Aorta (tissue), 5 donors: ENCODE measurements at regions of chr20 and their contacts with region 1.

Region 1: DNA sequence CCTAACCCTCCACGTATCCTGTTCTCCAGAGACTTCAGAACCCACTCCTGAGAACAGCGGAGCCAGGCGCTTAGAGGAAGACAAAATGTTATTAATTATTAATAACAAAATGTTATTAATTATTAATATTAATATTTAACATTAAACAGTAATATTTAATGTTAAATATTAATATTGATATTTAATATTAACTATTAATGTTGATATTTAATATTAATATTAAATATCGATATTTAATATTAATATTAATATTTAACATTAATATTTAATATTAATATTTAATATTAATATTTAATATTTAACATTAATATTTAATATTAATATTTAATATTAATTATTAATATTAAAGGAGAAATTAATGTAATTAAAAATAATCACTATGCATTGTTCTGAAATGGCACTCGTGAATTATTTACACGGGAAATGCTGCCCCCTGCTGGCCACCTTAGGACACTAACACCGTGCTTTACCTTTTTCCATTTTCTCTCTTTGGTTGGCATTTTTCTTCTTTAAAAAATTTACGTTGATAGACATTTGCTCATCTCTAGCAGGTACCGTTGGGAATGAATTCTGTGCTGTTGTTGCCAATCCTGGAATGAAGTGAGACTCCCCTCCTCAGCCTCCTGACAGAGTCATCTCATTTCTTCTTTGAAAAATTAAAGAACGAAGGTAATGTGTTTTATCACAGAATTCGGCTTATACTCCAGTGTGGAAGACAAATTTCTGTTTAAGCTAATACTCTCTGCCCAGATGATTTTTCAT is 7.5 kb upstream of the GGTLC1 start:
- DNase-seq: peak; percentile 64 to 86
- ATAC-seq: no peak
- H3K4me3 ChIP-seq: no peak overlapping the region
- H3K27ac ChIP-seq: no peak overlapping the region
- H3K4me1 ChIP-seq: no peaks in the 10 kb centered on the region
- H3K27me3 ChIP-seq: no peaks in the 10 kb centered on the region

Region 2: DNA sequence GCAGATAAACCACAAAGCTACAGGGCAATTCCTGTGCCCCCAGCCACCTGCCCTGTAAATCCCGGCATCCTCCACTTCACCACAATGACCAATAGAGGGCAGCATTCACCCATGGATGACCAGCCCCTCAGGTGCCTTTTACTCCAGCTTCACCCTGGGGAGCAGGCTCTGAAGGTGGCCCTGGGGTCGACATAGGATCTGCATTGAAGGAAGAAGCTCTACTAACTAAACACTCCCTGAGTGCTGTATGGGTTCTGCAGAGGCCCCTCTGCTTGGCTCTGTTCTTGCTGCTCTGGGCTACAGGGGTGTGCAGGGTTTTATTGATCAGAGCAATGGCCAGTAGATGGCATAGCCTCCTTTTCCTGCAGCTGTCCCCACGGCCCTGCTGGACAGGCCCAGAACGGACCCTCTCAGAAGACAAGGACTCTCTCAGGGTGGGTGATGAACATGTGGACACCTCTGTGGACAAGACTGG is 327.6 kb before region 1 on chr20:
- intact Hi-C with region 1: loop called in 1 of 2 experiments (anchors 10 kb)
- DNase-seq: no peak
- ATAC-seq: peak; percentile 79
- H3K4me3 ChIP-seq: no peak overlapping the region
- H3K27ac ChIP-seq: no peak overlapping the region
- H3K4me1 ChIP-seq: no peaks in the 10 kb centered on the region
- H3K27me3 ChIP-seq: no peaks in the 10 kb centered on the region

Region 3: GRCh38 chr20:24176661-24177060 is 180.6 kb after region 1 on chr20:
- intact Hi-C with region 1: no loop called
- DNase-seq: no peak
- ATAC-seq: no peak
- H3K4me3 ChIP-seq: no peak overlapping the region
- H3K27ac ChIP-seq: no peak overlapping the region
- H3K4me1 ChIP-seq: no peaks in the 10 kb centered on the region
- H3K27me3 ChIP-seq: peaks cover 0 to 2% of the 10 kb centered on the region in 2 donors

Region 4: GRCh38 chr20:24422091-24422760 is 426.1 kb after region 1 on chr20:
- intact Hi-C with region 1: no loop called
- DNase-seq: no peak
- ATAC-seq: no peak
- H3K4me3 ChIP-seq: no peak overlapping the region
- H3K27ac ChIP-seq: no peak overlapping the region
- H3K4me1 ChIP-seq: no peaks in the 10 kb centered on the region
- H3K27me3 ChIP-seq: no peaks in the 10 kb centered on the region